Right cardiac atrium (tissue), 5 donors: ENCODE measurements at regions of chr9 and their contacts with region 1.

Region 1: DNA sequence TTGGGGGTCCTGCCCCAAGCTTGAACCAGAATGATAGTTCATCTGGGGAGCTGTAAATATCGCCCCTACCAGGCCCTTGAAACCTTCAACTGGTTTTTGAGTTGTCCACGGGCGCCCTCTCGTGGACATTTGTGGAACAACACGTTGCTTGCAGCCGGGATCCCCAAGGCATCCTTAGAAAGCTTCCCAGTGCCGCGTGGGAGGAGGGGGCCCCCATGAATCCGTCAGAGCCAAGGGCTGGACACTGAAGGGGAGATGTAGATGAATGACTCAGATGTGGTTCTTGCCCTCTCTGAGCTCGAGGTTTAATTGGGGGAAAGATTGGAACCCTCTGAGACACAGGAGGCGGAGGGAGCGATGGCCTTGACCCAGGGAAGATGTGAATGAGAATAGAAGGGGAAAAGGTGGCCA is 31.8 kb upstream of the ORM1 start:
- DNase-seq: peak; percentile 66 to 87 (median 87)
- ATAC-seq: peak; percentile 25 to 34
- H3K4me3 ChIP-seq: no peak overlapping the region
- H3K27ac ChIP-seq: no peak overlapping the region
- H3K4me1 ChIP-seq: no peaks in the 10 kb centered on the region
- H3K27me3 ChIP-seq: no peaks in the 10 kb centered on the region

Region 2: GRCh38 chr9:113807173-113808061 is 483.7 kb before region 1 on chr9:
- intact Hi-C with region 1: loop called in 1 of 4 experiments (anchors 10 kb)
- DNase-seq: peak in 2 of 3 donors; percentile 38 to 67
- ATAC-seq: peak; percentile 74 to 76
- H3K4me3 ChIP-seq: no peak overlapping the region
- H3K27ac ChIP-seq: no peak overlapping the region
- H3K4me1 ChIP-seq: no peaks in the 10 kb centered on the region
- H3K27me3 ChIP-seq: no peaks in the 10 kb centered on the region

Region 3: DNA sequence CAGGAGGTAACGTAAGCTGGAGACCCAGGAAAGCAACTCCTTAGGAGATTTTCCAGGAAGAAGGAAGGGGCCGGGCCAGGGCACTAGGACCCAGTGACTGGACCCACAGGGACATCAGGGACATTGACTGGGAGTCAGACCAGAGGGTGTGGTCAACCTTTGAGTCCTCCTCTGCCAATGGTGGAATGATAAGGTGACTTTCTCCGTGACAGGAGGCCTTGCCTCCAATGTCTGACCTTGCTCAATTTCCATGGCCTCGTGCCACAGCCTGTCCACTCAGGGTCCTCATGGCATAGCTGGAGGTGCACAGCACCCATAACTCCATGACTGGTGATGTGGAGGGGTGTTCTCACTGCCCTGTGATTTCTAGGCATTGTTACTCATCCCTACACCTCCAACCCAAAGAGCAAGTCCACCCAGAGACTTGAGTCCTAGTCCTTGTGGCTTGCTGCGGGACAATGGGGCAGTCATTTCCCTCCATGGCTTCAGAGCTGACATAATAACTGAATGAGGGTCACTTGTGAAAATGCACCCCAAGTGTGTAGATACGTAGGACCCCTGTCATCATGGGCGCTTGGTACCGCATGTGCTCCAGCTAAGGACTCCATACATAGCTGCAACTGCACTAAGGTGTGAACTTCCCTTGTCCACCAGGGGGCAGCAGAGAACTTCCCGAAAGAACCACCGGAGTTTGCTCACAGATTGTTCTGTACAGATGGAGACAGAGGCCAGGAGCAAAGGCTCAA is 208.9 kb before region 1 on chr9:
- intact Hi-C with region 1: loop called in 3 of 4 experiments (anchors 5 kb)
- DNase-seq: peak; percentile 82 to 92 (median 87)
- ATAC-seq: peak; percentile 88 to 90
- H3K4me3 ChIP-seq: no peak overlapping the region
- H3K27ac ChIP-seq: no peak overlapping the region
- H3K4me1 ChIP-seq: no peaks in the 10 kb centered on the region
- H3K27me3 ChIP-seq: no peaks in the 10 kb centered on the region

Region 4: GRCh38 chr9:114108016-114108833 is 182.8 kb before region 1 on chr9:
- intact Hi-C with region 1: loop called in 3 of 4 experiments (anchors 2 to 5 kb)
- DNase-seq: peak; percentile 81 to 94 (median 93)
- ATAC-seq: peak; percentile 95 to 97
- H3K4me3 ChIP-seq: no peak overlapping the region
- H3K27ac ChIP-seq: no peak overlapping the region
- H3K4me1 ChIP-seq: peaks cover 2% of the 10 kb centered on the region
- H3K27me3 ChIP-seq: no peaks in the 10 kb centered on the region